ENCODE measurements at regions of chr19 and their contacts with region 1.

Region 1: DNA sequence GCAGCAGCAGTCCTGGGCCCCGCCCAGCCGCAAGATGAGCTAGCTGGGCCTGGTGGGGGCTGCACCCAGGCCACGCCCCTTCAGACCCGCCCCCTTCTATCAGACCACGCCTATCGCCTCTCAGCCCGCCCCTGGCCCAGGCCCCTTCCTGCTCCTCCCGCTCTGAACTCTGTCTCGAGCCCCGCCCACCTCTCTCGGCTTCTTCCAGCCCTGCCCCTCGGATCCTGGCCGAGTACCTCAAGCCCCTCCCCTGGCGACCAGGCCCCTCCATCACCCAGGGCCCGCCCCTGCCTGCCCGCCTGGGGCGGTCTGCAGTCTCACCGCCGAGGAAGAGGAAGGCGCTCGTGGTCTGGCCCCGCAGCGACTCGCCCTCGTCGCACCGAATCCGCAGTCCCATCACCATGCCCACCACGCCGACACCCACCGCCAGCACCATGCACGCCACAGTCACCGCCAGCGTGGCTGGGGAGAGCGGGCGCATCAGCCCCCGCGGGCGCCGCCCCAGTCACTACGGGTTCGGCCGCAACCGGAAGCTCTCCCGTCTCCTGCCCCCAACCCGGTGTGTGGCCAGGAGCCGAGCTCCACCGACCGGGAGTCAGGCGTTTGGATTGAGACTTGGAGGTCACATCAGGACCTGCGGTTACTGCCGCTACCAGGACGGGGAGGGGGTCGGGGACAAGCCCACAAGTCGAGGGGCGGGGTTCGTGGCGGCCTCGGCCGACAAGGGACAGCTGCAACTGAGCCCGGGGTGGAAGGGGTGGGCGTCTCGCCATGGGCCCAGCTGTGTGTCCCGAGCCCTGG is 1.0 kb downstream of the CLDND2 start:
- DNase-seq: peak; percentile 99 to 100
- H3K4me3 ChIP-seq: peak overlapping the region; percentile 71 to 97
- H3K27ac ChIP-seq: peak overlapping the region; percentile 97
- H3K4me1 ChIP-seq: peaks cover 0 to 29% (median 22%) of the 10 kb centered on the region in 4 donors
- H3K27me3 ChIP-seq: peaks cover 0 to 2% of the 10 kb centered on the region in 2 donors
- CTCF ChIP-seq: no peak

Region 2: GRCh38 chr19:51688672-51689571 is 321.2 kb after region 1 on chr19:
- intact Hi-C with region 1: loop called (anchors 10 kb)
- DNase-seq: peak; percentile 90 to 97
- H3K4me3 ChIP-seq: peak overlapping the region; percentile 71 to 97
- H3K27ac ChIP-seq: peak overlapping the region; percentile 94 to 100
- H3K4me1 ChIP-seq: peaks cover 0 to 48% (median 34%) of the 10 kb centered on the region in 4 donors
- H3K27me3 ChIP-seq: no peaks in the 10 kb centered on the region
- CTCF ChIP-seq: peak; percentile 28 to 32

Measured in tibial artery (tissue), 4 donors.